ENCODE measurements at regions of chr11 and their contacts with region 1.

Region 1: GRCh38 chr11:100031973-100032372 is 655.1 kb upstream of the ARHGAP42 start:
- DNase-seq: no peak
- ATAC-seq: no peak
- H3K4me3 ChIP-seq: no peak overlapping the region
- H3K27ac ChIP-seq: no peak overlapping the region
- H3K4me1 ChIP-seq: no peaks in the 10 kb centered on the region
- H3K27me3 ChIP-seq: no peaks in the 10 kb centered on the region

Region 2: DNA sequence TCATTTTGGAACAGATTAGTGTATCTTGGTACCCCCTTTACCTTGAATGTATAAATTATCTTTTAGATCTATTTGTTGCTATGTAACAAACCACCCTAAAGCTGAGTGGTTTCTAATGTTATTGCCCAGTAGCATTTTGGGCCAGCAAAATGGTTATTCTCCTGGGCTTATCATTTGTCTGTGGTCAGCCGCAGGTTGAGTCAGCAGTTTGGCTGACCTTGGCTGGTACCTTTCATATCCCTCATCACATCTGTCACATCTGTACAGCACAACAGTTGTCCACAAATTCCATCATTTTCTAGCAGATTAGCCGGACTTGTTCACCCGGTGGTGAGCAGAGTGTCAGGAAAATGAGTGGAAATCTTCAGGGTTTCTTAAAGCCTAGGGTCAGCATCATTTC is 66.6 kb after region 1 on chr11:
- intact Hi-C with region 1: loop called in 1 of 2 experiments (anchors 10 kb)
- DNase-seq: no peak
- ATAC-seq: no peak
- H3K4me3 ChIP-seq: no peak overlapping the region
- H3K27ac ChIP-seq: no peak overlapping the region
- H3K4me1 ChIP-seq: no peaks in the 10 kb centered on the region
- H3K27me3 ChIP-seq: no peaks in the 10 kb centered on the region

Region 3: DNA sequence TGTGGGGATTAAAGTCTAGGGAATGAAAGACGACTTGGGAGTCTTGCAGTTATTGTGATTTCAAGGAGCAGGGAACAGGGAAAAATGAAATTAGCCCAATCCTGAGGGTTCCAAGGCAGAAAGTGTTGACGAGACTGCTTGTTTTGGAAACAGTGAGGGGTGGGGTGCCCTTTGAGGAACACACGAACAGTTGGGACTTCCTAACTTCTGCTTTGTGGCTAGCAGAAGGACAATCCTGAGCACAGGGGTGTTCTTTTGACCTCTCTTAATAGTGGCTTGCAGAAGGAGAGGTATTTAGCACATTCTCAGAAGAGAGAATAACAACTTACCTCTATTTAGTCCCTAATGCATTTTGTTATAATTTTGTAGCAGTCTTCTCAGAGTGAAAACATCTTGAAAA is 109.2 kb after region 1 on chr11:
- intact Hi-C with region 1: loop called in 1 of 2 experiments (anchors 5 kb)
- DNase-seq: no peak
- ATAC-seq: no peak
- H3K4me3 ChIP-seq: no peak overlapping the region
- H3K27ac ChIP-seq: no peak overlapping the region
- H3K4me1 ChIP-seq: no peaks in the 10 kb centered on the region
- H3K27me3 ChIP-seq: no peaks in the 10 kb centered on the region